ENCODE measurements at regions of chr4 and their contacts with region 1.

Region 1: GRCh38 chr4:67087897-67088296 is 457.4 kb downstream of the CENPC start:
- DNase-seq: peak; percentile 71
- ATAC-seq: no peak
- H3K4me3 Mint-ChIP-seq: no peak overlapping the region
- H3K27ac Mint-ChIP-seq: no peak overlapping the region
- H3K4me1 Mint-ChIP-seq: no peaks in the 10 kb centered on the region
- H3K27me3 Mint-ChIP-seq: peaks cover 2% of the 10 kb centered on the region

Region 2: GRCh38 chr4:67109276-67109675 is 21.4 kb after region 1 on chr4:
- CTCF ChIA-PET with region 1: no interaction called
- POLR2A ChIA-PET with region 1: no interaction called
- intact Hi-C with region 1: no loop called
- DNase-seq: no peak
- ATAC-seq: no peak
- H3K4me3 Mint-ChIP-seq: no peak overlapping the region
- H3K27ac Mint-ChIP-seq: no peak overlapping the region
- H3K4me1 Mint-ChIP-seq: no peaks in the 10 kb centered on the region
- H3K27me3 Mint-ChIP-seq: no peaks in the 10 kb centered on the region

Region 3: GRCh38 chr4:67198727-67199126 is 110.8 kb after region 1 on chr4:
- CTCF ChIA-PET with region 1: no interaction called
- POLR2A ChIA-PET with region 1: no interaction called
- intact Hi-C with region 1: no loop called
- DNase-seq: no peak
- ATAC-seq: no peak
- H3K4me3 Mint-ChIP-seq: no peak overlapping the region
- H3K27ac Mint-ChIP-seq: no peak overlapping the region
- H3K4me1 Mint-ChIP-seq: no peaks in the 10 kb centered on the region
- H3K27me3 Mint-ChIP-seq: peaks cover 2% of the 10 kb centered on the region

Region 4: GRCh38 chr4:67288964-67289363 is 201.1 kb after region 1 on chr4:
- CTCF ChIA-PET with region 1: no interaction called
- POLR2A ChIA-PET with region 1: no interaction called
- intact Hi-C with region 1: loop called in 1 of 2 experiments (anchors 1 kb)
- DNase-seq: peak; percentile 59
- ATAC-seq: no peak
- H3K4me3 Mint-ChIP-seq: no peak overlapping the region
- H3K27ac Mint-ChIP-seq: no peak overlapping the region
- H3K4me1 Mint-ChIP-seq: no peaks in the 10 kb centered on the region
- H3K27me3 Mint-ChIP-seq: no peaks in the 10 kb centered on the region

Region 5: GRCh38 chr4:67327262-67328017 is 239.5 kb after region 1 on chr4:
- CTCF ChIA-PET with region 1: interaction called, 36 read pairs
- POLR2A ChIA-PET with region 1: no interaction called
- intact Hi-C with region 1: loop called (anchors 1 kb)
- DNase-seq: peak; percentile 66
- ATAC-seq: peak; percentile 74
- H3K4me3 Mint-ChIP-seq: no peak overlapping the region
- H3K27ac Mint-ChIP-seq: no peak overlapping the region
- H3K4me1 Mint-ChIP-seq: peaks cover 2% of the 10 kb centered on the region
- H3K27me3 Mint-ChIP-seq: peaks cover 16% of the 10 kb centered on the region

Region 6: DNA sequence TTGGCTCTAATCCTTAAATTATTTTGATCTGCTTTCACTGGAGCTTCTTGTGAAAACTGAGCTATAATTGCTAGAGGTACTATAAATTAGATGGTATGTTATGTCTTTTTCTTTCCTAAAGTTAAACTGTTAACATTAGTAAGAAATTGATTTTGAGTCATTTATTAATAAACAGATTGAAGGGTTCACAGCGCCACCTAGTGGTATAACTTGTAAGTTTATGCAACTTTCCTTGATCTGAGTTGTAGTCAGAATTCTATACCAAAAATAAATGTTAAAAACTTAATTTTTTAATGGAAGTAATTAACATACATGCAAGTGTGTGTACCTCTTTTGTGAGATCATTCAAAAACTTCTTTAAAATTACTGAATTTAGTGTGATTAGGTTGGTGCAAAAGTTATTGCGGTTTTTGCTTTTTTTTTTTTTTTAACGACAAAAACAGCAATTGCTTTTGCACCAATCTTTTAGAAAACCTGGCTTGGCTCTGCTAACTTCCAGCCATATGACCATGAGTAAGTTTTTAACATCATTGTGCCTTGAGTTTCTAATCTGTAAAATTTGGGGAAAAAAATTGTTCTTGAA is 305.9 kb after region 1 on chr4:
- CTCF ChIA-PET with region 1: interaction called, 5 read pairs
- POLR2A ChIA-PET with region 1: no interaction called
- intact Hi-C with region 1: loop called (anchors 1 to 5 kb)
- DNase-seq: peak; percentile 22
- ATAC-seq: no peak
- H3K4me3 Mint-ChIP-seq: no peak overlapping the region
- H3K27ac Mint-ChIP-seq: no peak overlapping the region
- H3K4me1 Mint-ChIP-seq: no peaks in the 10 kb centered on the region
- H3K27me3 Mint-ChIP-seq: peaks cover 5% of the 10 kb centered on the region

Measured in activated CD4-positive, alpha-beta T cell treated with anti-CD3 and anti-CD28 coated beads for 36 hours (primary cell).